Activated CD4-positive, alpha-beta T cell treated with anti-CD3 and anti-CD28 coated beads for 36 hours (primary cell): ENCODE measurements at regions of chr9 and their contacts with region 1.

Region 1: GRCh38 chr9:78982849-78983248 is 588.9 kb upstream of the TLE4 start:
- DNase-seq: no peak
- ATAC-seq: no peak
- H3K4me3 Mint-ChIP-seq: no peak overlapping the region
- H3K27ac Mint-ChIP-seq: no peak overlapping the region
- H3K4me1 Mint-ChIP-seq: no peaks in the 10 kb centered on the region
- H3K27me3 Mint-ChIP-seq: no peaks in the 10 kb centered on the region

Region 2: DNA sequence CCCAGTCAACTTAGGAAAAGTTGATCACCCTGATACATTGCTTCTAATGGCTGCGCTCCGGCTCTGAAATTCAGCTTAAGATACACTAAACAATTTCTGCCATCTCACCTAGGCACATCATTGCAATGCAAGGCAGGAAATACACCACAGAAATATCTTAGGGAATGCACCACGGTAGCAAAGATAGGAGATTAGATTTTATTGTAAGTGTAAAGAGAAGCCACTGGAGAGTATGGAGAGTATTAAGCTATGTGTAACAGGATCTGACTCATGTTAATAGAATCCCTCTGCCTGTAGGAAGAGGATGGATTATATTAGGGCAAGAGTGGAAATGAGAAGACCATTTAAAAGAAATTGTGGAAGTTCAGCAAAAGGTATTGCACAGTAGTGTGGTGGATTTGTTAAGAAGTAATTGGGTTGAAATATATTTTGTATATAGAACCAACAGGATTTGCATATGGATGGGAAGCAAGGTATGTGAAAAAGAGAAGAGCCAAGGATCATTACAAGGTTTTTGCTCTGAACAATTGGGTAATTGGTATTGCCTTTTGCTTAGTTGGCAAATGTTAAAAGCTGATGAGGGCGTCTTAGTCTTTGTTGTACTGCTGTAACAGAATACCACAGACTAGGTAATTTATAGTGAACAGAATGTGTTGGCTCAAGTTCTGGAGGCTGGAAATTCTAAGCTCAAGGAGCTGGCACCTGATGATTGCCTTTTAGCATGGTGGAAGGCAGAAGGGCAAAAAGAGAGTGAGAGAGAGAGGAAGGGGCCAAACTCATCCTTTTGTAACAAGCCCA is 49.8 kb before region 1 on chr9:
- CTCF ChIA-PET with region 1: no interaction called
- POLR2A ChIA-PET with region 1: no interaction called
- intact Hi-C with region 1: loop called in 1 of 2 experiments (anchors 10 kb)
- DNase-seq: no peak
- ATAC-seq: no peak
- H3K4me3 Mint-ChIP-seq: no peak overlapping the region
- H3K27ac Mint-ChIP-seq: no peak overlapping the region
- H3K4me1 Mint-ChIP-seq: no peaks in the 10 kb centered on the region
- H3K27me3 Mint-ChIP-seq: no peaks in the 10 kb centered on the region

Region 3: GRCh38 chr9:78958892-78959291 is 24.0 kb before region 1 on chr9:
- CTCF ChIA-PET with region 1: no interaction called
- POLR2A ChIA-PET with region 1: no interaction called
- intact Hi-C with region 1: no loop called
- DNase-seq: no peak
- ATAC-seq: no peak
- H3K4me3 Mint-ChIP-seq: no peak overlapping the region
- H3K27ac Mint-ChIP-seq: no peak overlapping the region
- H3K4me1 Mint-ChIP-seq: no peaks in the 10 kb centered on the region
- H3K27me3 Mint-ChIP-seq: no peaks in the 10 kb centered on the region